ENCODE measurements at regions of chr17 and their contacts with region 1.

Region 1: GRCh38 chr17:4796553-4796921 is 573 bp downstream of the PSMB6 start:
- DNase-seq: no peak
- ATAC-seq: no peak
- H3K4me3 ChIP-seq: peak overlapping the region; percentile 74 to 94
- H3K27ac ChIP-seq: peak overlapping the region in 1 of 2 donors; percentile 82
- H3K4me1 ChIP-seq: no peaks in the 10 kb centered on the region
- H3K27me3 ChIP-seq: no peaks in the 10 kb centered on the region

Region 2: GRCh38 chr17:4806777-4807604 is 10.5 kb after region 1 on chr17 and contains the start of gene PLD2:
- intact Hi-C with region 1: no loop called
- DNase-seq: peak; percentile 93 to 94
- ATAC-seq: peak; percentile 96
- H3K4me3 ChIP-seq: peak within 1 kb of the TSS; percentile 92 to 93
- H3K27ac ChIP-seq: no peak within 1 kb of the TSS
- H3K4me1 ChIP-seq: no peaks in the 10 kb centered on the region
- H3K27me3 ChIP-seq: no peaks in the 10 kb centered on the region
- total RNA-seq, gene PLD2: 25.3 to 65.0 TPM

Region 3: GRCh38 chr17:4837471-4838308 is 41.2 kb after region 1 on chr17:
- intact Hi-C with region 1: loop called in 1 of 2 experiments (anchors 5 kb)
- DNase-seq: no peak
- ATAC-seq: no peak
- H3K4me3 ChIP-seq: no peak overlapping the region
- H3K27ac ChIP-seq: no peak overlapping the region
- H3K4me1 ChIP-seq: no peaks in the 10 kb centered on the region
- H3K27me3 ChIP-seq: no peaks in the 10 kb centered on the region

Measured in aorta (tissue), 5 donors.